GM18951 (cell line): ENCODE measurements at regions of chr21 and their contacts with region 1.

Region 1: GRCh38 chr21:41283211-41283818 is 33.3 kb upstream of the FAM3B start:
- POLR2A ChIP-seq: no peak

Region 2: DNA sequence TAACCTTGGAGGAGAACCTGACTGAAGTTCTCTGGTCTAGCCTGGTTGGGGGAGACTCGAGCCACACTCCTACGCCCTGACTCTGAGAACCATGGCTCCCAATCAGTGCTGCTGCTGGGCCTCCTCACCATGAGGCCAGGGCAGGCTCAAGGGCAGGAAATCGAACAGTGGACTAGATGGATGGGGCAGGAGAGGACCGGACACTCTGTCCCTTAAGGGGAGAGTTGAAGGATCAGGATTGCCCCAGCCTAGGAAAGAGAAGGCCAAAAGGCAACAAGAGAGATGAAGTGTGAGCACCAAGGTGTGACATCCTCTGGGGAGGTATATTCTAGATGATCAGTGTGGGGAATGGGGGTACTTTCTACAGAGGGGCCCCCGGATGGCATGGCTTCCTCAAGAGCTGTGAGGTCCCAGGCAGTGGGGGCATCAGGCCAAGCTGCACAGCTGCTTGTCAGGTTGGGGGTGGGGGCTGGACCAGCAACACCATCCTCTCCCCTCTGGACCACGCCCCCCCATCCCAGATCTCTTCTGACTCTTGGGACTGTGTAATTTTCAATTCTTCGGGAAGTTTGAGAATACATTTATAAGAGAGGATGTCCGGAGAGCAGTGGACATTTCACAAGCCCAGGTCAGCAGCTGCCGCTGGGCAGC is 176.7 kb after region 1 on chr21:
- in situ Hi-C with region 1: loop called (anchors 10 kb)
- POLR2A ChIP-seq: peak; percentile 46